GM23248 (cell line): ENCODE measurements at regions of chr2 and their contacts with region 1.

Region 1: DNA sequence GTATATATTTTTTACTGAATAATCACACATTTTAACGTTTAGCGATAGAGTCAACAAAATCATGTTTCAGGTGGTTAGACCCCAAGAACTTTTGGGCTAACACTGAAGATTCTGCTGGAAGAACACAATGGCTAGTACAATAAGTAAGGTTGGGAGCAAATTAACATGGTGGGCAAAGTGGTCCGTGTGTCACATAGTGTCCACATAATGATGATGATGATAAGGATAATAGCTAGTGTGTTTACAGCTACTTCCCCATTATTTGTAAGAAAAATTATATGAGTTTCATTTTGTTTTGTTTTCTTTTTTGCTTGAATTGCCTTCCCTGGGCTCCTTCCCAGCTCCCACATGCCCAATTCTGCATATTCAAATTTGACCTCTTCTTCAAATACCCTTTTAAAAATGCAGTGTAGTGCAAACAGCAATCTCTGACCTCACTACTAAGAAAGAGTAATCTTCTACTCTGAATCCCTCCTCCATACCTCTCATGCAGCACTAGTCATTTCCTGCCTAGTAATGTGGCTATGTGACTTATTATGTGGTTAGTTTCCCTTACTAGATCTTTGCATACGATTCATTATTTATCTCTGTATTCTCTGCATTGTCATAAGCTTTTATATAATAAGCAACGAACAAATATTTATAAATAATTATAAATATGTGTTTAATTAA is 16.9 kb upstream of the VPS54 start:
- DNase-seq: peak; percentile 90
- H3K4me3 ChIP-seq: no peak overlapping the region
- H3K27ac ChIP-seq: no peak overlapping the region
- H3K4me1 ChIP-seq: peaks cover 22% of the 10 kb centered on the region
- H3K27me3 ChIP-seq: no peaks in the 10 kb centered on the region

Region 2: DNA sequence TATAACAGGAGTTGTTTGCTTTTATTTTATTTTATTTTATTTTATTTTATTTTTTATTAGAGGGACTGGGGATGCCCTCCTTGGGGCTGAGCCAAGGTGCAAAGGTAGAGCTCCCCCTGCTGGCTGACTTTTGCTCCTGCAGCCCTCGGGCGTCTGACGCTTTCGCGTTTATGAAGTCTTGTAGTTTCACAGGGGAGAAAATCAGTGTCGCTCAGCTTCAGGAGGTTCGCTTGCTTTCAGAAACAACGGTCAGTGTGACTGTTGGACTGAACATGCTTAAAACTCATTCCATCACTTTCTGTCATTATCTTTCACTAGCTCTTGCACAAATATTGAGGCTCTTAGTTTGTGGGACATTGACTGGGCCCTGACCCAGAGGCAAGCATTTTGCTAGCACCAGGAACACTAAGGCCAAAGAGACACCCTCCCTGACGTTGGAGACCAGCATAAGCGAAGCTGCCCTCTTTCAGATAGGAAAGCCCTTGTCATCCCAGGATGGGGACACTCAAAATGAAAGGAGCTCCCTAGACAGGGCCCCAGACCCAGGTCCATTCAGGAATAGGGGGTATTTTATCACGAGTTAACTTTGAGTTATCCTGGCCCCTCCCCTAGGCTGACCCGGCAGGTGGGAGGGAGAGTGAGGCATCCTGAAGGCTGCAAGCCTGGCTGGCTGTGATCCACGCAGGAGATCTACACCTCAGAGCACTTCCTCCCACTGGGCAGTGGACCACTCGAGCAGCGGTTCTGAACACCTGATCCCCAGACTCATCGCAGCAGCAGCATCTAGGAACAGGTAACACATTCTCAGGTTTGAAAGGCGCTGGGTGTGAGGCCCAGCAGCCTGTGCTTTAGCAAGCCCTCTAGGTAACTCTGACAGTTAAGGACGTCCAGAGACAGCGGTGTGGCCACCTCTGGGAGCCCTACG is 452.1 kb after region 1 on chr2:
- in situ Hi-C with region 1: loop called (anchors 25 kb)
- DNase-seq: peak; percentile 59
- H3K4me3 ChIP-seq: no peak overlapping the region
- H3K27ac ChIP-seq: no peak overlapping the region
- H3K4me1 ChIP-seq: no peaks in the 10 kb centered on the region
- H3K27me3 ChIP-seq: peaks cover 29% of the 10 kb centered on the region

Region 3: GRCh38 chr2:64504774-64505720 is 468.9 kb after region 1 on chr2:
- in situ Hi-C with region 1: no loop called
- DNase-seq: no peak
- H3K4me3 ChIP-seq: no peak overlapping the region
- H3K27ac ChIP-seq: no peak overlapping the region
- H3K4me1 ChIP-seq: no peaks in the 10 kb centered on the region
- H3K27me3 ChIP-seq: peaks cover 37% of the 10 kb centered on the region

Region 4: DNA sequence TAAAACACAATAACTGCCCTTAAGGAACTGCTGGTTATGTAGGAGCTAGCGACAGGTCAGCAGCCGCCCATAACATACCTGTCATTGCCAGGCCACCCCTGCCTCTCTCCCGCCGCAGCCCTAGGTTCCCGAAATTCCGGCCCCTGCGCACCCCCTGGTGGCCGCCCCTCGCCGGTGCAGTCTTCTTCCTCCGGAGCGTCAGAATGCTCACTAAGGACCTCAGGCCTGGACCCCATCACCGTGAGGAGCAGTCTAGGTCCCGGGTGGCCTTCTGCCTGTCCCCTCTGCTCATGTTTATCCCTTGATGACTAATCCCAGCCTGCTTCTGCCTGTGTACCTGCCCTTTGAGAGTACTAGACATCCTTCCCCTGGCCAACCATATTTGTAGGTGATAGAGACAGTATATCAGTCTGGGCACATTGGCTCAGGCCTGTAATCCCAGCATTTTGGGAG is 837.3 kb after region 1 on chr2:
- in situ Hi-C with region 1: loop called (anchors 25 kb)
- DNase-seq: peak; percentile 74
- H3K4me3 ChIP-seq: peak overlapping the region; percentile 38
- H3K27ac ChIP-seq: no peak overlapping the region
- H3K4me1 ChIP-seq: peaks cover 15% of the 10 kb centered on the region
- H3K27me3 ChIP-seq: 0 out of 2 replicates have a peak, but pooled peaks cover 3% of the 10 kb centered on the region